Activated naive CD4-positive, alpha-beta T cell treated with anti-CD3 and anti-CD28 coated beads for 36 hours (primary cell): ENCODE measurements at regions of chr5 and their contacts with region 1.

Region 1: DNA sequence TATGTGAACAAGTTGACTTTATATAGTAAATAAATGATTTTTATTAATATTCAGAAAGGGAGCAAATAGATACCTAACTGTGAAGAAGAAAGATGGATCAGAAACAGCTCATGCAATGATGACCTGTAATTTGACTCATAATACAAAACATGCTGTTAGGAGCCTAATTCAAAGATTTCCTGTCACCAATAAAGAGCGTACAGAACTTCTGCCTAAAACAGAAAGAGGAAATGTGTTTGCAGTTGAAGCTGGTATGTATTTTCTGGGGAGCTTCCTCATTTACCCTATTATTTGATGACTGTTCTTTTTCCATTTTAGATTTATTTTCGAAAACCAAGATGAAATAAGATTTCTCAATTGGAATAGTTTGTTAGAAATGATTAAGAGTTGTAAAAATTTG is 11.4 kb downstream of the YTHDC2 start:
- DNase-seq: no peak
- H3K4me3 Mint-ChIP-seq: peak overlapping the region; percentile 21
- H3K27ac Mint-ChIP-seq: peak overlapping the region; percentile 47
- H3K4me1 Mint-ChIP-seq: peaks cover 37% of the 10 kb centered on the region
- H3K27me3 Mint-ChIP-seq: no peaks in the 10 kb centered on the region

Region 2: GRCh38 chr5:113022661-113023060 is 502.3 kb before region 1 on chr5:
- CTCF ChIA-PET with region 1: no interaction called
- intact Hi-C with region 1: loop called (anchors 1 kb)
- DNase-seq: no peak
- H3K4me3 Mint-ChIP-seq: no peak overlapping the region
- H3K27ac Mint-ChIP-seq: peak overlapping the region; percentile 60
- H3K4me1 Mint-ChIP-seq: peaks cover 49% of the 10 kb centered on the region
- H3K27me3 Mint-ChIP-seq: no peaks in the 10 kb centered on the region

Region 3: DNA sequence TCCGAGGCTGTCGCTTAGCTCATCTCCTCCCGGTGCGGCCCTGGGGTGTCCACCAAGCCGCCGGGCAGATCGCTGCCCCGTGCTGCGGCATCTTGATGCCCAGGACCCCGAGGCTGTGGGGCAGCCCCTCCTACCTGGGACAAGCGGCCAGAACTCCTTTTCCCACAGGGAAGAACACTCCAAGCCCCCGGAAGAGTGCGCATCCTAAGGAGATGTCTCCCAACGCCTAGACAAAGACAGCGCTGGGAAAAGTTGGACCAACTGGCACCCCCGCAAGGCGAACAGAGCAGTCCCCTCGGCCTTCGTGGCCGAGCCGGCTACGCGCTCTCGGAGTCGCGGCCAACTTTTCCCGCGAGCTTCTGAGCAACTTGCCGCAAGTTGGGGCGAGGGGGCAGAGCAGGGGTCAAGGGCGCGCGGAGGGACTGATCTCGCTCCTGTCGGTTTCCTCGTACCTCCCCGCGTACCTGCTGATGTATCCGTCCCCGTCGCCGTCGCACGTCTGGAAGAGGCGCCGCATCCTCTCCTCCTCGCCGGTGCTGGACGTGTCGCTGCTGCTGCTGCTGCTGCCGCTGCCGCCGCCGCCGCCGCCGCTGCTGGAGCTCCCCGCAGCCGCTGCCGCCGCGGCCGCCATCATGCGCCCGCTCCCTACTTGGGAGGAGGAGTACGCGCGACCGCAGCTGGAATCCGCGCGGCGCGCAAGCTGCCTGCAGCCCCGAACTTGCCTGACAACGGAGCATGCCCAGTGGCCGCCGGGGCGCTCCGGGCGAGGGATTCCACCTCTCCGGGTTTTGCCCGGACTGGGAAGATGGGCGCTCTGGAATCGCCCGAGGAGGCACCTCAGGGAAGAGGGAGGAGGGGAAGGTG is 36.9 kb before region 1 on chr5 and contains the start of gene MCC:
- CTCF ChIA-PET with region 1: no interaction called
- intact Hi-C with region 1: no loop called
- DNase-seq: peak; percentile 49
- H3K4me3 Mint-ChIP-seq: peak within 1 kb of the TSS; percentile 75
- H3K27ac Mint-ChIP-seq: no peak within 1 kb of the TSS
- H3K4me1 Mint-ChIP-seq: peaks cover 9% of the 10 kb centered on the region
- H3K27me3 Mint-ChIP-seq: peaks cover 62% of the 10 kb centered on the region
- total RNA-seq, gene MCC: 0.62 to 0.81 TPM

Region 4: DNA sequence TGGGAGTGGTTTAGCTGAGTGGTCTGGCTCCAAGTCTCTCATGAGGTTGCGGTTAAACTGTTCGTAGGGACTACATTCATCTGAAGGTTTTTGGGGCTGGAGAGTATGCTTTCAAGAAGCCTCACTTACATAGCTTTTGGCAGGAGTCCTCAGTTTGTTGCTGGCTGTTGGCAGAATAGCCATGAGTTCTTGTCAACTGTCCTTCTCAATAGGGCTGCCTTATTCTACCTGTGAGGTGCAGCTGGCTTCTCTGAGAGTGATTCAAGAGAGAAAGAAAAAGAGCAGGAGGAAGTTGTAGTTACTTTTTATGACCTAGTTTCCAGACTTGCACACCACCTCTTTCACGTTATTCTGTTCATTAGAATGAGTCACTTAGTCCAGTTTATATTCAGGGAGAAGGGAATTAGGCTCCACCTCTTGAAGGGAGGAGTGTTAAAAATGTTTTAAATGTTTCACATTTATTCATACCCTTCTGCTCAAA is 21.8 kb after region 1 on chr5:
- CTCF ChIA-PET with region 1: interaction called, 3 read pairs
- intact Hi-C with region 1: loop called (anchors 2 kb)
- DNase-seq: peak; percentile 5
- H3K4me3 Mint-ChIP-seq: no peak overlapping the region
- H3K27ac Mint-ChIP-seq: peak overlapping the region; percentile 57
- H3K4me1 Mint-ChIP-seq: peaks cover 13% of the 10 kb centered on the region
- H3K27me3 Mint-ChIP-seq: no peaks in the 10 kb centered on the region

Region 5: DNA sequence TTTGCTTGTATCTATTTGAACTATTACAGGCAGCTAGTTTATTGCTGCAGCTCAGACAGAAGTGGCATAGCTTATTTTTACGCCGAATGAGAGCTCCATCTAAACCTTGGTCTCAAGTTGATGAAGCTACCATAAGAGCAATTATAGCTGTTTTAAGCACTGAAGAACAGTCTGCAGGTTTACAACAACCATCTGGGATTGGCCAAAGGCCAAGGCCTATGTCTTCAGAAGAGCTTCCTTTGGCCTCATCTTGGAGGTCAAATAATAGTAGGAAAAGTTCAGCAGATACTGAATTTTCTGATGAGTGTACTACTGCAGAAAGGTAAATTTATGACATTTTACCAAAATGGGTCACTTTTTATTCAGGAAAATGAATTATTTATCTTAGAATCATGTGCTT is 56.5 kb after region 1 on chr5:
- CTCF ChIA-PET with region 1: no interaction called
- intact Hi-C with region 1: no loop called
- DNase-seq: no peak
- H3K4me3 Mint-ChIP-seq: no peak overlapping the region
- H3K27ac Mint-ChIP-seq: no peak overlapping the region
- H3K4me1 Mint-ChIP-seq: peaks cover 2% of the 10 kb centered on the region
- H3K27me3 Mint-ChIP-seq: no peaks in the 10 kb centered on the region

Region 6: GRCh38 chr5:113713051-113713450 is 188.1 kb after region 1 on chr5:
- CTCF ChIA-PET with region 1: no interaction called
- intact Hi-C with region 1: no loop called
- DNase-seq: no peak
- H3K4me3 Mint-ChIP-seq: no peak overlapping the region
- H3K27ac Mint-ChIP-seq: no peak overlapping the region
- H3K4me1 Mint-ChIP-seq: no peaks in the 10 kb centered on the region
- H3K27me3 Mint-ChIP-seq: peaks cover 9% of the 10 kb centered on the region